HAP-1 (cell line): ENCODE measurements at regions of chrX and their contacts with region 1.

Region 1: GRCh38 chrX:140141444-140142029 is 176.2 kb upstream of the CXorf66 start:
- DNase-seq: peak; percentile 71 to 85
- H3K4me3 ChIP-seq: no peak overlapping the region
- H3K4me1 ChIP-seq: peaks cover 11% of the 10 kb centered on the region
- H3K27me3 ChIP-seq: no peaks in the 10 kb centered on the region

Region 2: DNA sequence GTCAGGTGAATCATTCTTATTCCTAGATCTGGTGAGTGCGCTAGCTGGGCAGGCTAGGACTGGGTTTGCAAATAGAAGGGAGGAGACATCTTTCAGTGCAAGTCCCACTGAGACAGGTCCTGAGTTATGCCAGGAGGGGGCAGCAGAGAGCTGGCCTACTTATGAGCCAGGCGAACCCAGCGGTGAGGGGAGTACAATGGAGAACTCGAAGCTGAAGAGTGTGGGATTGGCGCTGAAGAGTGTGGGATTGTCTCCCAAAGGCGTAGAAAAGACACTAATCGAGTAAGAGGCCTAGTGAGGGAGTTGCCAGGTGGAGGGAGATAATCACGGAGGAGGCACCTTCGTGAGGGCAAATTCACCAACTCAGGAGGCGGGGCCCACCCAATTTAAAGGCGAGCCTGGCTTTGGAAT is 84.5 kb before region 1 on chrX:
- in situ Hi-C with region 1: loop called (anchors 5 kb)
- DNase-seq: peak; percentile 90 to 94
- H3K4me3 ChIP-seq: no peak overlapping the region
- H3K4me1 ChIP-seq: peaks cover 32% of the 10 kb centered on the region
- H3K27me3 ChIP-seq: no peaks in the 10 kb centered on the region

Region 3: GRCh38 chrX:140071037-140071436 is 70.5 kb before region 1 on chrX:
- in situ Hi-C with region 1: loop called (anchors 5 kb)
- DNase-seq: no peak
- H3K4me3 ChIP-seq: no peak overlapping the region
- H3K4me1 ChIP-seq: no peaks in the 10 kb centered on the region
- H3K27me3 ChIP-seq: no peaks in the 10 kb centered on the region